ENCODE measurements at regions of chr15 and their contacts with region 1.

Region 1: DNA sequence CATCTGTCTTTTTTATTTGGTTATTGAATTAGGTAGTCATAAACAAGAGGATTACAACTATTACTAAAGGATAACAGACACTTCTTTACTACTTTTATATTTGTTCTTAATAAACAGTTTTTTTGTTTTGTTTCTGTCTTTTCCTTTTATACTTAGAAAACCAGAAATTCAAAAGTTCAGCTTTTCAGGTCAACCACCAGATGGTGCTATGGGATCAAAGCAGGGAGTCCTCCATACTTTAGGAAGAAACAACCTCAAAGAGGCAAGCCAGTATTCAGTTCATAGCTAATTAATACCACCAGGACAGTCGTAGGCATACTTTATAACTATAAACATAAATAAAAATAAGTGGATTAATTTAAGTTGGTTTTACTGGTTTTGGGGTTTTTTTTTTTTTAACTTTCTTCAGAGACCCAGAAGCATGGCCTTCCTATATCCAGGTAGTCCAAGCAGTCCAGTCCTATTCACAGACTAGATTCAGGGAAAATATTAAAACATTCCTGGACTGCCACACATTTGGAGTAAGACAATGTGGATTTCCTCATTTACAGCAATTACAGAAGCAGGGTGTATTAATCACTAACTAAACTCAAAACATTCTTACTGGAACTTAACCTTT is 16.0 kb upstream of the EID1 start:
- DNase-seq: no peak
- ATAC-seq: peak; percentile 79 to 82
- H3K4me3 ChIP-seq: no peak overlapping the region
- H3K27ac ChIP-seq: no peak overlapping the region
- H3K4me1 ChIP-seq: no peaks in the 10 kb centered on the region
- H3K27me3 ChIP-seq: no peaks in the 10 kb centered on the region
- CTCF ChIP-seq: peak; percentile 90

Region 2: GRCh38 chr15:48759921-48760320 is 102.0 kb before region 1 on chr15:
- intact Hi-C with region 1: no loop called
- DNase-seq: no peak
- ATAC-seq: peak; percentile 81 to 94
- H3K4me3 ChIP-seq: no peak overlapping the region
- H3K27ac ChIP-seq: no peak overlapping the region
- H3K4me1 ChIP-seq: no peaks in the 10 kb centered on the region
- H3K27me3 ChIP-seq: no peaks in the 10 kb centered on the region
- CTCF ChIP-seq: no peak

Region 3: GRCh38 chr15:48800811-48801455 is 61.0 kb before region 1 on chr15:
- intact Hi-C with region 1: no loop called
- DNase-seq: no peak
- ATAC-seq: peak; percentile 38 to 59
- H3K4me3 ChIP-seq: no peak overlapping the region
- H3K27ac ChIP-seq: no peak overlapping the region
- H3K4me1 ChIP-seq: peaks cover 9% of the 10 kb centered on the region
- H3K27me3 ChIP-seq: no peaks in the 10 kb centered on the region
- CTCF ChIP-seq: peak; percentile 48

Region 4: GRCh38 chr15:49145651-49146609 is 284.0 kb after region 1 on chr15:
- intact Hi-C with region 1: loop called (anchors 10 kb)
- DNase-seq: no peak
- ATAC-seq: peak in 1 of 2 donors; percentile 75
- H3K4me3 ChIP-seq: no peak overlapping the region
- H3K27ac ChIP-seq: no peak overlapping the region
- H3K4me1 ChIP-seq: peaks cover 43% of the 10 kb centered on the region
- H3K27me3 ChIP-seq: no peaks in the 10 kb centered on the region
- CTCF ChIP-seq: peak; percentile 68

Region 5: DNA sequence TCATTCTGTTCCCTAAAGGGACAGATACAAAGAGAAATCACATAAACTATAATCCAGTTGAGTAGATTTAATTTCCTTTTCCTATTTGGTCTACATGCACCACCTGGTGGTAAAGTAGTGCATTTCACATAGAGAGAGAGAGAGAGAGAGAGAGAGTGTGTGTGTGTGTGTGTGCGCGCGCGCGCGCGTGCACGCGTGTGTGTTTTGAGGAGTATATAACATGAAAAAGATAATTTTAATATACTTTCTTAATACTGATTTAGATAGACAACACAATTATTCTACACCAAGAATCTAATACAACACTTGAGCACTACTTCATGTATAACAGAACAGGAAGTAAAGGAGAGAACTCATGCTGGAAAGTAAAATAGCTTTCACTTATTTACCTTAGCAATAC is 560.1 kb after region 1 on chr15:
- intact Hi-C with region 1: loop called (anchors 5 kb)
- DNase-seq: peak; percentile 64
- ATAC-seq: peak; percentile 85 to 89
- H3K4me3 ChIP-seq: peak overlapping the region; percentile 47
- H3K27ac ChIP-seq: peak overlapping the region; percentile 12
- H3K4me1 ChIP-seq: no peaks in the 10 kb centered on the region
- H3K27me3 ChIP-seq: no peaks in the 10 kb centered on the region
- CTCF ChIP-seq: peak; percentile 82

Measured in lower lobe of right lung (tissue), 2 donors.